CD4-positive, alpha-beta T cell (primary cell): ENCODE measurements at regions of chr1 and their contacts with region 1.

Region 1: DNA sequence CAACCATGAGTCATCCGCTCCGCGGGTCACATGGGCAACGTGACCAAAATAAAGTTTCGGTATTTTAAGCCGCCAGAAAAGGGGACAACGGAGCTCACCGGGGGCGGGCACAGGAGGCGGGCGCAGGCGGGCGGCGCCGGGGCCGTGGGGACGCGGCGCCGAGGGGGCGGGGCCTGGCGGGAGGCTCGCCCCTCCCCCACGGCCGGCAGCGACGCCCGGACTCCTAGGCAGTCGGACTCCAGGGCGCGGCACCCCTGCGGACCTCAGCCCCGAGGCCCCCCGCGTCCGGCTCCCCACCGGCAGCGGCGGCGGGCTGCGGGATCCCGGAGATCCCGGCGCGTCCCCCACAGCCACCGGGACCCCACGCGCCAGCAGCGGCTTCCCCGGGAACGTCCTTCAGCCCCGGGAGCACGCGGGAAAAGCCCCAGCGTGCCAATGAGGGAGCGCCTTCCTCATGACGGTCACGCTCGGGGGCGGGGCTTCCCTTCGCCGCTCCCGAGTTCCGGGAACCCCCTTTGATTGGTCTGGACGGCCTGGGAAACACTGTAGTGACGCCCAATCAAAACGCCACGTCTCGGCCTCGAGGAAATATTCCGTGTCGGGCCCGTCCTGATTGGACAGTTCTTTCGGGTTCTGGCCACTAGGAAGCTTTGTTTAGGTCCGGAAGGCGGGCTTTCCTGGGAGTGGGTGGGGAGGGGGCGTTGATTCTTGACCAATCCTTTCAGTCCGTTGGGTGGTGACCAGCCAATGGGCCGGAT is 515 bp upstream of the CAMTA1 start:
- DNase-seq: peak; percentile 96 to 100 (median 99)
- ATAC-seq: peak; percentile 23
- H3K4me3 ChIP-seq: peak overlapping the region; percentile 80
- H3K4me3 Mint-ChIP-seq: peak overlapping the region; percentile 97
- H3K27ac ChIP-seq: peak overlapping the region; percentile 88 to 92
- H3K27ac Mint-ChIP-seq: peak overlapping the region; percentile 89
- H3K4me1 ChIP-seq: peaks cover 25% of the 10 kb centered on the region
- H3K4me1 Mint-ChIP-seq: peaks cover 51% of the 10 kb centered on the region
- H3K27me3 ChIP-seq: no peaks in the 10 kb centered on the region
- H3K27me3 Mint-ChIP-seq: no peaks in the 10 kb centered on the region
- CTCF ChIP-seq: no peak

Region 2: GRCh38 chr1:5992026-5992813 is 792.5 kb before region 1 on chr1 and contains the start of gene NPHP4:
- CTCF ChIA-PET with region 1: no interaction called
- POLR2A ChIA-PET with region 1: interaction called, 4 read pairs
- intact Hi-C with region 1: loop called in 1 of 2 experiments (anchors 10 kb)
- DNase-seq: peak; percentile 97 to 100 (median 99)
- ATAC-seq: peak; percentile 89
- H3K4me3 ChIP-seq: peak within 1 kb of the TSS; percentile 76
- H3K4me3 Mint-ChIP-seq: peak within 1 kb of the TSS; percentile 95
- H3K27ac ChIP-seq: peak within 1 kb of the TSS; percentile 73 to 92
- H3K27ac Mint-ChIP-seq: peak within 1 kb of the TSS; percentile 94
- H3K4me1 ChIP-seq: peaks cover 46% of the 10 kb centered on the region
- H3K4me1 Mint-ChIP-seq: peaks cover 34% of the 10 kb centered on the region
- H3K27me3 ChIP-seq: no peaks in the 10 kb centered on the region
- H3K27me3 Mint-ChIP-seq: no peaks in the 10 kb centered on the region
- CTCF ChIP-seq: no peak
- total RNA-seq, gene NPHP4: 6.2 to 7.7 TPM

Region 3: GRCh38 chr1:6393400-6394187 is 391.1 kb before region 1 on chr1 and contains the start of gene ACOT7:
- CTCF ChIA-PET with region 1: no interaction called
- POLR2A ChIA-PET with region 1: no interaction called
- intact Hi-C with region 1: loop called in 1 of 2 experiments (anchors 10 kb)
- DNase-seq: peak; percentile 84 to 97 (median 90)
- ATAC-seq: peak; percentile 90
- H3K4me3 ChIP-seq: peak within 1 kb of the TSS; percentile 69
- H3K4me3 Mint-ChIP-seq: peak within 1 kb of the TSS; percentile 92
- H3K27ac ChIP-seq: peak within 1 kb of the TSS; percentile 69 to 81
- H3K27ac Mint-ChIP-seq: peak within 1 kb of the TSS; percentile 90
- H3K4me1 ChIP-seq: peaks cover 27% of the 10 kb centered on the region
- H3K4me1 Mint-ChIP-seq: peaks cover 31% of the 10 kb centered on the region
- H3K27me3 ChIP-seq: no peaks in the 10 kb centered on the region
- H3K27me3 Mint-ChIP-seq: no peaks in the 10 kb centered on the region
- CTCF ChIP-seq: no peak
- total RNA-seq, gene ACOT7: 5.3 to 5.4 TPM

Region 4: GRCh38 chr1:6691507-6691906 is 93.2 kb before region 1 on chr1:
- CTCF ChIA-PET with region 1: no interaction called
- POLR2A ChIA-PET with region 1: no interaction called
- intact Hi-C with region 1: no loop called
- DNase-seq: no peak
- ATAC-seq: no peak
- H3K4me3 ChIP-seq: no peak overlapping the region
- H3K4me3 Mint-ChIP-seq: no peak overlapping the region
- H3K27ac ChIP-seq: no peak overlapping the region
- H3K27ac Mint-ChIP-seq: no peak overlapping the region
- H3K4me1 ChIP-seq: no peaks in the 10 kb centered on the region
- H3K4me1 Mint-ChIP-seq: peaks cover 11% of the 10 kb centered on the region
- H3K27me3 ChIP-seq: no peaks in the 10 kb centered on the region
- H3K27me3 Mint-ChIP-seq: no peaks in the 10 kb centered on the region
- CTCF ChIP-seq: no peak

Region 5: DNA sequence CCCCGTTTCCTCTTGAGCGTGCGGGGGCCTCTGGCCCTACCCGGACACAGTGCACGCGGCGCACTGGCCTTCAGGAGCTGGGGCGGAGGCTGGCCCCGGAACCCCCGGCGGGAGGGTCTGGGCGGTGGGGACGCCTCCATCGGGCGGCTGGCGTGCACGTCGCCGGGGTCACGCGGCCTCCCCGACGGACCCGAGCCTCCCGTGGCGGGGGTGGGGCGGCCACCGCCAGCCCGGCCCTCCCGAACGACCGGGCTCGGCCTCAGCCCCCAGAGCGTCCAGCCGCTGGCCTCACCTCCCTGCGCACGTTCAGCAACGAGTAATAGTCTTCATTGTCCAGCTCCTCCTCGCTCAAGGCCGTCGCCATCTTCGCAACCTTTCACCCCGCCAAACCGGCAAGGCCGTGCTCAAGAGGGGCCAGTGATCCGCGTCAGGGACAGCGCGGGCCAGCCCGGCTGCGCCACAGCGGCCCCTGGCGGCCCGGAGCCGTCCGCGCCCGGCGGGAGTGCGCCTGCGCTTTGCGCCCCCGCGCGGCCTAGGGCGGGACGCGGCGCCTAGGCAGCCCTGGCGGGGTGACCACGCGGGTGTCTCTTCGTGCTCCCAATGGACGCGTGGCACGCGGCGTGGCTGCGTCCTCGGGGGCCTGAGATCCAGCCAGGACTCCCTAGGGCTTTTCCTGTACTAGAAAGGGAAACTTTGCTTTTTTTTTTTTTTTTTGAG is 83.1 kb before region 1 on chr1 and contains the start of gene DNAJC11:
- CTCF ChIA-PET with region 1: interaction called, 5 read pairs
- POLR2A ChIA-PET with region 1: interaction called, 8 read pairs
- intact Hi-C with region 1: loop called in 1 of 2 experiments (anchors 1 kb)
- DNase-seq: peak; percentile 80 to 95 (median 88)
- ATAC-seq: peak; percentile 98
- H3K4me3 ChIP-seq: peak within 1 kb of the TSS; percentile 86
- H3K4me3 Mint-ChIP-seq: peak within 1 kb of the TSS; percentile 96
- H3K27ac ChIP-seq: peak within 1 kb of the TSS in 1 of 2 donors; percentile 60
- H3K27ac Mint-ChIP-seq: peak within 1 kb of the TSS; percentile 76
- H3K4me1 ChIP-seq: peaks cover 18% of the 10 kb centered on the region
- H3K4me1 Mint-ChIP-seq: peaks cover 43% of the 10 kb centered on the region
- H3K27me3 ChIP-seq: no peaks in the 10 kb centered on the region
- H3K27me3 Mint-ChIP-seq: no peaks in the 10 kb centered on the region
- CTCF ChIP-seq: peak; percentile 55
- total RNA-seq, gene DNAJC11: 20.6 to 24.0 TPM

Region 6: GRCh38 chr1:7110321-7110720 is 325.6 kb after region 1 on chr1:
- CTCF ChIA-PET with region 1: no interaction called
- POLR2A ChIA-PET with region 1: no interaction called
- intact Hi-C with region 1: no loop called
- DNase-seq: no peak
- ATAC-seq: no peak
- H3K4me3 ChIP-seq: no peak overlapping the region
- H3K4me3 Mint-ChIP-seq: no peak overlapping the region
- H3K27ac ChIP-seq: no peak overlapping the region
- H3K27ac Mint-ChIP-seq: no peak overlapping the region
- H3K4me1 ChIP-seq: no peaks in the 10 kb centered on the region
- H3K4me1 Mint-ChIP-seq: no peaks in the 10 kb centered on the region
- H3K27me3 ChIP-seq: peaks cover 0 to 5% of the 10 kb centered on the region in 2 experiments
- H3K27me3 Mint-ChIP-seq: peaks cover 20% of the 10 kb centered on the region
- CTCF ChIP-seq: no peak

Region 7: GRCh38 chr1:7961216-7962015 is 1176.7 kb after region 1 on chr1 and contains the start of gene PARK7:
- CTCF ChIA-PET with region 1: no interaction called
- POLR2A ChIA-PET with region 1: no interaction called
- intact Hi-C with region 1: loop called in 1 of 2 experiments (anchors 5 kb)
- DNase-seq: peak; percentile 99 to 100 (median 100)
- ATAC-seq: peak; percentile 95
- H3K4me3 ChIP-seq: peak within 1 kb of the TSS; percentile 84
- H3K4me3 Mint-ChIP-seq: peak within 1 kb of the TSS; percentile 99
- H3K27ac ChIP-seq: peak within 1 kb of the TSS; percentile 88 to 94
- H3K27ac Mint-ChIP-seq: peak within 1 kb of the TSS; percentile 98
- H3K4me1 ChIP-seq: peaks cover 56% of the 10 kb centered on the region
- H3K4me1 Mint-ChIP-seq: peaks cover 78% of the 10 kb centered on the region
- H3K27me3 ChIP-seq: no peaks in the 10 kb centered on the region
- H3K27me3 Mint-ChIP-seq: no peaks in the 10 kb centered on the region
- CTCF ChIP-seq: peak; percentile 57
- total RNA-seq, gene PARK7: 57.7 to 62.4 TPM